GM12878 (cell line): ENCODE measurements at regions of chr3 and their contacts with region 1.

Region 1: DNA sequence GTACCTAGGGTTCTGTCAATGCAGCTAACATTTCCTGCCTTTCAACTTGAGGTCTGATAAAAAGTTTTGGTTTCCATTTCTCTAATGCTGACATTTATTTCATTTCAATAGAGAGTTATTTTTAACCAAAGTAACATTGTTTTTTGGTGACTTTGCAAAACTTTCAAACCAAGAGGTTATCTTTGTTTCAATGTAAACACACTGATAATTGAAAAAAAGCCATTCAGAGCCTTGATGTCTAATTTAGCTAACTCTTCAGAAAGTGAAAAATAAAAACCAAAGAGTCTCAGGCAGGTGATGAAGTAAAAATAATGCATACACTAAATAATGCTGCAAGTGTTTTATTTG is 9.6 kb upstream of the TIPARP start:
- DNase-seq: no peak
- ATAC-seq: peak; percentile 78
- H3K4me3 ChIP-seq: no peak overlapping the region
- H3K27ac ChIP-seq: peak overlapping the region; percentile 97
- H3K4me1 ChIP-seq: peaks cover 55% of the 10 kb centered on the region
- H3K27me3 ChIP-seq: no peaks in the 10 kb centered on the region
- CTCF ChIP-seq: no peak
- EP300 ChIP-seq: peak; percentile 69 to 92; a peak in 3 of 4 replicates
- POLR2A ChIP-seq: no peak
- RAD21 ChIP-seq: no peak

Region 2: GRCh38 chr3:155791190-155791589 is 873.6 kb before region 1 on chr3:
- CTCF ChIA-PET with region 1: no interaction called
- POLR2A ChIA-PET with region 1: no interaction called
- RAD21 ChIA-PET with region 1: no interaction called
- SMC1A ChIA-PET with region 1: no interaction called
- in situ Hi-C with region 1: no loop called
- intact Hi-C with region 1: no loop called
- DNase-seq: no peak
- ATAC-seq: no peak
- H3K4me3 ChIP-seq: no peak overlapping the region
- H3K27ac ChIP-seq: no peak overlapping the region
- H3K4me1 ChIP-seq: no peaks in the 10 kb centered on the region
- H3K27me3 ChIP-seq: no peaks in the 10 kb centered on the region
- CTCF ChIP-seq: no peak
- EP300 ChIP-seq: no peak
- POLR2A ChIP-seq: no peak
- RAD21 ChIP-seq: no peak

Region 3: DNA sequence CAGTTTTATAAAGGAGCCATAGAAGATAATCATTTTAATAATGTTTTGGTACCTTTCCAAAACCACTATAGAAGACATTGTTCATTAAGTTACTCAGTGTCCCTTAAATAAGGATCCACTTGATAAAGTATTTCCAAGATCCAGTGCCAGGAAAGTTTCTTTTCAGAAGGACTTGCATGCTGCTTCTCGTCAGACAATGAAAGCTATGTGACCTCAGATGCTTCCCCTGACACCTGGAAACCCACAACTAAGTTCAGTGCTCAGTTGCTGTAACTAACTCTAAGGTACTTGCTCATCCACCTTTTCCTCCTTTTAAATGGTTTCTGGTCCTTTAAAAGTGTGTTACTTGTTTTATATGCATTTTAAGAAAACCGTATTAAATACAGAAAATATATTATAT is 117.2 kb before region 1 on chr3:
- CTCF ChIA-PET with region 1: interaction called, 5 read pairs
- POLR2A ChIA-PET with region 1: no interaction called
- RAD21 ChIA-PET with region 1: interaction called, 7 read pairs
- SMC1A ChIA-PET with region 1: interaction called, 36 read pairs
- in situ Hi-C with region 1: loop called (anchors 5 kb)
- intact Hi-C with region 1: no loop called
- DNase-seq: no peak
- ATAC-seq: no peak
- H3K4me3 ChIP-seq: no peak overlapping the region
- H3K27ac ChIP-seq: no peak overlapping the region
- H3K4me1 ChIP-seq: no peaks in the 10 kb centered on the region; the same call in 1 of the 2 replicates
- H3K27me3 ChIP-seq: no peaks in the 10 kb centered on the region
- CTCF ChIP-seq: no peak
- EP300 ChIP-seq: no peak
- POLR2A ChIP-seq: no peak
- RAD21 ChIP-seq: no peak

Region 4: DNA sequence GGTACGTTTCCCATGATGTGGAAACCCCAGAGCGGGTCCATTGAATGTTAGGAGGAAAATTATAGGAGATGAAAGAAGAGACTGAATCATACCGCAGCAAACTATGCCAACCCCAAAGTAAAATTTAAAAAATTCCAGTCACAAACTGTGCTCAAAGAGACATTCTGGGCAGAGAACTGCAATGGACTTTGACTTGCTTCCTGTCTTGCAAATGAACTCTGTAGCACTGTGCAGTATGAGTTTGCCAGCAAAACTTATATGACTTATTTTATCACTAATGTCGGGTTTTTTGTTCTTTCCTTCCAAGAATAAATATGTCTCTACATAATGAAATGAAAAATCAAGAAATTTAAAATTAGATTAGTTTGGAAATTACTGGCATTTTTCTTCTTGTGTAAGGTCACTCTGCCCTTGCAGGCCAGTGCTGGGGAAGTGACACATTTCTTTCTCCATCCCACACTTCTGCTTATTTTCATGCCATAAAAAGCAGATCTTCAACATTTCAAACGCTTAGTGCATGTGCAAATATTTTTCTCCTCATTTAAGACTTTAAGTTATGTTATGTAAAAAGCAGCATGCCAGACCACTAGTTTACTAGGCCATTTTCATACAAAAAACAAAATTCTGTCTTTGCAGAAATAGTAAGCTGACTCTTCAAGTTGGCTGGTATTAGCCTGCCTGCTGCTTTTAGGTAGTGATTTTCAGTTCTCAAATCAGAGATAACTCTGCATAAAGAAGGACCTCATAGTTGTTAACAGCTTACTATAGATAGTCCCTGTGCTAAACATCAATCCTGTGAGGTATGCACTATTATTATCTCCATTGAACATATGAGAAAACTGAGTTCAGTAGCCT is 77.7 kb before region 1 on chr3:
- CTCF ChIA-PET with region 1: interaction called, 6 read pairs
- POLR2A ChIA-PET with region 1: interaction called, 4 read pairs
- RAD21 ChIA-PET with region 1: interaction called, 3 read pairs
- SMC1A ChIA-PET with region 1: interaction called, 10 read pairs
- in situ Hi-C with region 1: no loop called
- intact Hi-C with region 1: loop called (anchors 2 kb)
- DNase-seq: no peak
- ATAC-seq: peak; percentile 67
- H3K4me3 ChIP-seq: no peak overlapping the region
- H3K27ac ChIP-seq: no peak overlapping the region
- H3K4me1 ChIP-seq: peaks cover 27% of the 10 kb centered on the region; the same call in 1 of the 2 replicates
- H3K27me3 ChIP-seq: no peaks in the 10 kb centered on the region
- CTCF ChIP-seq: no peak
- EP300 ChIP-seq: no peak
- POLR2A ChIP-seq: no peak
- RAD21 ChIP-seq: no peak

Region 5: DNA sequence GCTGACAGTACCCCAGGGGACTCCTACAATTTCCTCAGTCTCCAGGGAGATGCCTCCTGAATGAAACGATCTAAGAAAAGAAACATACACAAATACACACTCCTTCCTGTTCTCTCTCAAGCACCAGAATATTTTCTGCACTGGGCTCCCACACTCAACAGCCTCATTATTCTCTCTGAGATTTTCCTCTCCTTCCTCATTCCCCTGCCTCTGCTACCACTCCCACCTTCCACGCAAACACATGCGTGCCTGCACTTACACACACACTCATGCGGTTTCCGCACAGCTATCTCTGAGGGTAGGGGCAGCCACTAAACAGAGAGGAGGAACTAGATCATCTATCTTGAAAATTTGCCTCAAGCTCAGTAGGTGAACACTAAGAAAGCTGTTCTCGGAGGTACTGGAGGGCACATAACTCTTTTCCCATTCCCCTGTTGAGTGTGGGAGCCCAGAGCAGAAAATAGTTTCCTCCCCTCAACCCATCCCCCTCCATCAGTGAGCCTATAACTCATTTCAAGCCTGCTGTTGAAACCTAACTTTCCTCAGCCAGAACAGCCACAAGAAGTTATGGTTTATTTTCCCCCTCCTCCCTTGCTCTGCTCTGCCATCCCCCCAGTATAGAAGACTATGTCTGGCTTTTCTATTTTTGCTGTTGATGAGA is 20.9 kb before region 1 on chr3:
- CTCF ChIA-PET with region 1: interaction called, 27 read pairs
- POLR2A ChIA-PET with region 1: interaction called, 13 read pairs
- RAD21 ChIA-PET with region 1: interaction called, 17 read pairs
- SMC1A ChIA-PET with region 1: interaction called, 33 read pairs
- in situ Hi-C with region 1: no loop called
- intact Hi-C with region 1: loop called (anchors 2 kb)
- DNase-seq: peak; percentile 76
- ATAC-seq: peak; percentile 90
- H3K4me3 ChIP-seq: peak overlapping the region; percentile 8; the same call in 1 of the 2 replicates
- H3K27ac ChIP-seq: peak overlapping the region; percentile 67
- H3K4me1 ChIP-seq: peaks cover 26% of the 10 kb centered on the region
- H3K27me3 ChIP-seq: no peaks in the 10 kb centered on the region
- CTCF ChIP-seq: no peak
- EP300 ChIP-seq: peak; percentile 81 to 84
- POLR2A ChIP-seq: no peak
- RAD21 ChIP-seq: no peak

Region 6: GRCh38 chr3:156892701-156893100 is 227.9 kb after region 1 on chr3:
- CTCF ChIA-PET with region 1: no interaction called
- POLR2A ChIA-PET with region 1: no interaction called
- RAD21 ChIA-PET with region 1: no interaction called
- SMC1A ChIA-PET with region 1: no interaction called
- in situ Hi-C with region 1: no loop called
- intact Hi-C with region 1: no loop called
- DNase-seq: no peak
- ATAC-seq: no peak
- H3K4me3 ChIP-seq: no peak overlapping the region
- H3K27ac ChIP-seq: no peak overlapping the region
- H3K4me1 ChIP-seq: no peaks in the 10 kb centered on the region
- H3K27me3 ChIP-seq: no peaks in the 10 kb centered on the region
- CTCF ChIP-seq: no peak
- EP300 ChIP-seq: no peak
- POLR2A ChIP-seq: no peak
- RAD21 ChIP-seq: no peak